ENCODE measurements at regions of chr3 and their contacts with region 1.

Region 1: GRCh38 chr3:12706504-12707253 is 42.8 kb upstream of the RAF1 start:
- DNase-seq: peak in 1 of 2 donors; percentile 52
- ATAC-seq: peak; percentile 77 to 89 (median 84)
- H3K4me3 ChIP-seq: no peak overlapping the region
- H3K27ac ChIP-seq: no peak overlapping the region
- H3K4me1 ChIP-seq: peaks cover 0 to 22% (median 12%) of the 10 kb centered on the region in 9 donors
- H3K27me3 ChIP-seq: no peaks in the 10 kb centered on the region
- CTCF ChIP-seq: peak; percentile 28 to 81 (median 69)

Region 2: GRCh38 chr3:12681943-12682390 is 24.7 kb before region 1 on chr3:
- intact Hi-C with region 1: loop called in 1 of 10 experiments (anchors 1 kb)
- DNase-seq: peak in 1 of 2 donors; percentile 26
- ATAC-seq: peak; percentile 53 to 89 (median 78)
- H3K4me3 ChIP-seq: no peak overlapping the region
- H3K27ac ChIP-seq: peak overlapping the region; percentile 1 to 93 (median 64)
- H3K4me1 ChIP-seq: peaks cover 0 to 22% (median 11%) of the 10 kb centered on the region in 9 donors
- H3K27me3 ChIP-seq: no peaks in the 10 kb centered on the region
- CTCF ChIP-seq: no peak

Region 3: GRCh38 chr3:12829886-12830784 is 123.5 kb after region 1 on chr3:
- intact Hi-C with region 1: loop called in 1 of 10 experiments (anchors 5 kb)
- DNase-seq: no peak
- ATAC-seq: peak in 4 of 8 donors; percentile 3 to 53 (median 19)
- H3K4me3 ChIP-seq: no peak overlapping the region
- H3K27ac ChIP-seq: no peak overlapping the region
- H3K4me1 ChIP-seq: peaks cover 0 to 2% (median 0%) of the 10 kb centered on the region in 9 donors
- H3K27me3 ChIP-seq: no peaks in the 10 kb centered on the region
- CTCF ChIP-seq: peak in 1 of 9 donors; percentile 18

Measured in heart right ventricle (tissue), 16 donors.